Dorsolateral prefrontal cortex (tissue), 120 donors: ENCODE measurements at regions of chr17 and their contacts with region 1.

Region 1: DNA sequence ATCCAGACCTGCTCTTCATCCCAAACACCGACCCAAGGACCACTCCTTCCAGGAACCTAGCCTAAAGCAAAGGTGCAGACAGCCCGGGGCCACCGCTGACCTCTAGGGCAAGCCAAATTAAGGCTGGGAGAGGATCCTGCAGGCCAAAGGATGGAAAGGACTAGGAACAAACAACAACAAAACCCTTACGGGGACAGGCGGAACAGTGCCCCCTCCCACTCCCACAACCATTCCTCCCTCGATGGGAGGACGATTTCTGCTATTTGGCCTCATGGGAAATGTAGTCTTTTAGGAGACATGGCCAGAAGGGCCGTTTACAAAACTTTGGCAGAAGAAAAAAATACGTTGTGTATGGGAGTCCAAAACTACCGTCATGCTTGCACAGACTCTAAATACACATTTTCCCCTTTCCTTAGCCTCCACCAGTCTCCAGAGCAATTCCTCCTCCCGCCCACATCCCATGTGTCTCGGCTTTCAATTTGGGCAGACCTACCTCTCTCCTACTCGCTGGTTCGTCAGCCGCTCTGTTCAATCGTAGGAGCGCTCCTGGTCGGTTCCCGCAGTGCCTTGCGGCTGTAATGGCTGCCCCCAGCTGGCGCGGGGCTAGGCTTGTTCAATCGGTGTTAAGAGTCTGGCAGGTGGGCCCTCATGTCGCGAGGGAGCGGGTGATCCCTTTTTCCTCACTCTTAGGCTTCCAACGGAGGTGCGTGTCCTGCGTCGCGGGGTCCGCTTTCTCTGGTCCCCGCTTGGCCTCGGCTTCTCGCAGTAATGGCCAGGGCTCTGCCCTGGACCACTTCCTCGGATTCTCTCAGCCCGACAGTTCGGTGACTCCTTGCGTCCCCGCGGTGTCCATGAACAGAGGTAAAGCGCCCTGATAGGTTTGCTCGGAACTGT is at the start of gene ERAL1:
- DNase-seq: peak; percentile 74 to 93 (median 92)
- H3K4me3 ChIP-seq: peak within 1 kb of the TSS; percentile 58 to 93 (median 81)
- H3K27ac ChIP-seq: peak within 1 kb of the TSS; percentile 56 to 97 (median 86)
- H3K27me3 ChIP-seq: no peaks in the 10 kb centered on the region
- CTCF ChIP-seq: peak in 41 of 56 donors; percentile 8 to 64 (median 41)
- total RNA-seq, gene ERAL1: 32.0 to 63.5 (median 45.6) TPM

Region 2: GRCh38 chr17:28812091-28812747 is 42.5 kb before region 1 on chr17:
- intact Hi-C with region 1: loop called in 1 of 2 experiments (anchors 5 kb)
- DNase-seq: peak; percentile 95 to 99 (median 98)
- H3K4me3 ChIP-seq: peak overlapping the region; percentile 70 to 98 (median 90)
- H3K27ac ChIP-seq: peak overlapping the region; percentile 68 to 99 (median 93)
- H3K27me3 ChIP-seq: no peaks in the 10 kb centered on the region
- CTCF ChIP-seq: peak in 8 of 56 donors; percentile 4 to 45 (median 19)

Region 3: GRCh38 chr17:28896884-28897768 is 42.4 kb after region 1 on chr17 and contains the start of gene FLOT2:
- intact Hi-C with region 1: loop called (anchors 2 to 5 kb)
- DNase-seq: peak in 8 of 10 donors; percentile 31 to 75 (median 55)
- H3K4me3 ChIP-seq: peak within 1 kb of the TSS; percentile 41 to 97 (median 88)
- H3K27ac ChIP-seq: peak within 1 kb of the TSS; percentile 59 to 99 (median 95)
- H3K27me3 ChIP-seq: no peaks in the 10 kb centered on the region
- CTCF ChIP-seq: peak in 34 of 56 donors; percentile 6 to 56 (median 28)
- total RNA-seq, gene FLOT2: 50.7 to 182 (median 108) TPM